Activated T-helper 2 cell treated with anti-CD3 and anti-CD28 coated beads, Interferon-gamma antibody, Interleukin-2, Interleukin-4, amounts not matched to agents 10 μg/mL and 5 μg/mL and 100 μg/mL, durations not matched to agents 14 hours and 24 hours and 36 hours (primary cell): ENCODE measurements at regions of chr13 and their contacts with region 1.

Region 1: DNA sequence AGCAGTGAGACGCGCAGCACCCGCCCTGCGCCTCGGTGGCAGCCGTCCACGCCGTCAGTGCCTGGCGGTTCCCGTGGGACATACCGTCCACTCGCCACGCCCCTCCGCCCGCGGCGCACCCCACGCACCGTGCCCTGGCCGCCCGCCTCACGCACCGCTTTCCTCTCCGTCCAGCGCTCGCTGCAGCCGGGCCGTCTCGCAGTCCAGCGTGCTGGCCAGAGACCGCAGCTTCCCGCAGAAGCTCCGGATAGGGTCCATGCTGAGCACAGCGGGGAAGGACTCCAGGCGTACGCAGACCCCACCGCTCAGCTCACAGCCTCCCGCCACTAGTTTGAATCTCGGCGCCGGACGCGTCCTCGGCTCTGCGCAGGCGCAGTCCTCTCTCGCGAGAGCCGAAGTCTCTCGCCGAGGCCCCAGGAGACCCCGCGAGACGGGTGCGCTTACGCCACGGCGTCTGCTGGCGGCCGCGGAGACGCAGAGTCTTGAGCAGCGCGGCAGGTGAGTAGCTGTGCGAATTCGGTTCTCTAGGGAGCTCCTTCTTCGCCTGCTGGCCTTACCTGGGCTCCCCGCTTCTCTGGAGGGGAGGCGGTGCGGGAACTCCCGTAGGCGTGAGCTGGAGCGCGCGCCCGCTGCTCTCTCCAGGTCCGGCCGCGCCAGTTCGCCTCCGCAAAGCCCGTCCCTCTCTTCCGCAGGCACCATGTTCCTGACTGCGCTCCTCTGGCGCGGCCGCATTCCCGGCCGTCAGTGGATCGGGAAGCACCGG is at the starts of genes MRPL57 and SKA3:
- DNase-seq: peak; percentile 94
- H3K4me3 Mint-ChIP-seq: peak within 1 kb of the TSS; percentile 97
- H3K27ac Mint-ChIP-seq: peak within 1 kb of the TSS; percentile 95
- H3K4me1 Mint-ChIP-seq: peaks cover 17% of the 10 kb centered on the region
- H3K27me3 Mint-ChIP-seq: no peaks in the 10 kb centered on the region
- total RNA-seq, gene MRPL57: 28.5 and 28.9 TPM in 2 replicates
- total RNA-seq, gene SKA3: 29.4 and 29.6 TPM in 2 replicates

Region 2: DNA sequence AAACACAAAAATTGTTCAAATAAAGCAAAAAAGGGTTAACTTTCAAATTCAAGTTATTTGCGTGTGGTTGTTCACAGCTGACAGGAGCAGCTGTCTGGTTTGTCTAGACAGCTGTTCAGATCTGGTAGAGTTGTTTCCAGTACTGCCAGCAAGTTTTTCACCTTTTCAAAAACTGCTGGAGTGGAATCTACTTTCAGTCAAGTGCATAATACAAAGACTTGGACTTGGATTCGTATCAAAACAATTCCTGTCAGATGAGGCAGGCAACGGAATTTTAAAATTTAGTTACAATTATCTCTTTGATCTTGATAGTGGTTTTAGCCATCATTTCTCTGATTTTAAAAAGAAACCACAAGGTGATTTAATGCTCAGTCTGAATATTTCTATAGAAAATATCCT is 350.9 kb before region 1 on chr13:
- intact Hi-C with region 1: no loop called
- DNase-seq: no peak
- H3K4me3 Mint-ChIP-seq: no peak overlapping the region
- H3K27ac Mint-ChIP-seq: no peak overlapping the region
- H3K4me1 Mint-ChIP-seq: peaks cover 9% of the 10 kb centered on the region
- H3K27me3 Mint-ChIP-seq: no peaks in the 10 kb centered on the region

Region 3: DNA sequence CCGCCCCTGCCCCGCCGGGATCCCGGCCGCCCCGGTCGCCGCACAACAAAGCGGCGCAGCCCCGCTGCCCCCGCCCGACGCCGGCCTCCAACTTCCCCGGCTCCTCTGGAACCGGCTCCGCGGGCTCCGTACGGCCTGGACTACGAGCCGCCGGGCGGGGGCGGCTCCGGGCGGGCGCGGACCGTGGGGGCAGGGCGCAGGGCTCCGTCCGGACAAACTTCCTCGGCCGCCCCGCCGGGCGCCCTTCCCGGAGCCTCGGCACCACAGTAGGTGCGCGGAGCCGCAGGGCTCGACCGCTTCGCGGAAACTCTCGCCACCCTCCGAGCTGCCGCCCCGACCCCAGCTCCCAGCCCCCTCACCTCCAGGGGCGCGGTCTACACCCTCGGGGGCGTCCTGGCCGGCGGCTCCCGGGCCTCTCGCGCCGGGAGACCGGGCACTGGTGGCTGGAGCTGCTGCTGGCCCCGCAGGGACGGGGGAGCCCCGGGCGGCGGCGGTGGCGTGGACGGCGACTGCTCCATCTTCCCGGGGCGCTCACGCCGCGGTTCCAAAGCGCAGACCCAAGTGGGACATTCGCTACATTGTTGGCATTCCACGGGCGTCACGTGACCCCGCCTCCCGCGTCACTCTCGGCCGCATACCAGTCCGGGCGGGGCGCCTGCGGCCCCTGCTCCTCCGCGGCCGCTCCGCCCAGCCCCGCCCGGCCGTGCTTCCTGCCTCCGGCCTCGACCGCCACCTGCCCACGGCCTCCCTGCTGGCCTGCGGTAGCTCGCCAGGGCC is 115.2 kb before region 1 on chr13 and contains the start of gene LATS2:
- intact Hi-C with region 1: loop called (anchors 2 kb)
- DNase-seq: peak; percentile 49
- H3K4me3 Mint-ChIP-seq: peak within 1 kb of the TSS; percentile 80
- H3K27ac Mint-ChIP-seq: no peak within 1 kb of the TSS
- H3K4me1 Mint-ChIP-seq: peaks cover 4% of the 10 kb centered on the region
- H3K27me3 Mint-ChIP-seq: peaks cover 39% of the 10 kb centered on the region
- total RNA-seq, gene LATS2: 2.6 and 2.7 TPM in 2 replicates

Region 4: GRCh38 chr13:21106089-21106488 is 70.3 kb before region 1 on chr13:
- intact Hi-C with region 1: loop called (anchors 1 kb)
- DNase-seq: no peak
- H3K4me3 Mint-ChIP-seq: no peak overlapping the region
- H3K27ac Mint-ChIP-seq: no peak overlapping the region
- H3K4me1 Mint-ChIP-seq: no peaks in the 10 kb centered on the region
- H3K27me3 Mint-ChIP-seq: no peaks in the 10 kb centered on the region

Region 5: GRCh38 chr13:21458813-21459701 is 282.7 kb after region 1 on chr13 and contains the start of gene ZDHHC20:
- intact Hi-C with region 1: loop called (anchors 5 kb)
- DNase-seq: peak; percentile 85
- H3K4me3 Mint-ChIP-seq: peak within 1 kb of the TSS; percentile 92
- H3K27ac Mint-ChIP-seq: peak within 1 kb of the TSS; percentile 90
- H3K4me1 Mint-ChIP-seq: peaks cover 27% of the 10 kb centered on the region
- H3K27me3 Mint-ChIP-seq: no peaks in the 10 kb centered on the region
- total RNA-seq, gene ZDHHC20: 59.0 and 63.3 TPM in 2 replicates

Region 6: GRCh38 chr13:21603531-21604448 is 427.4 kb after region 1 on chr13 and contains the start of gene MICU2:
- intact Hi-C with region 1: loop called (anchors 1 kb)
- DNase-seq: peak; percentile 94
- H3K4me3 Mint-ChIP-seq: peak within 1 kb of the TSS; percentile 81
- H3K27ac Mint-ChIP-seq: peak within 1 kb of the TSS; percentile 85
- H3K4me1 Mint-ChIP-seq: peaks cover 22% of the 10 kb centered on the region
- H3K27me3 Mint-ChIP-seq: peaks cover 11% of the 10 kb centered on the region
- total RNA-seq, gene MICU2: 36.6 and 38.8 TPM in 2 replicates